Endothelial cell of umbilical vein (primary cell): ENCODE measurements at regions of chr2 and their contacts with region 1.

Region 1: GRCh38 chr2:142796161-142796560 is 81.3 kb upstream of the KYNU start:
- DNase-seq: peak; percentile 34
- H3K4me3 ChIP-seq: no peak overlapping the region
- H3K27ac ChIP-seq: no peak overlapping the region
- H3K4me1 ChIP-seq: no peaks in the 10 kb centered on the region
- H3K27me3 ChIP-seq: no peaks in the 10 kb centered on the region
- CTCF ChIP-seq: no peak
- POLR2A ChIP-seq: no peak

Region 2: DNA sequence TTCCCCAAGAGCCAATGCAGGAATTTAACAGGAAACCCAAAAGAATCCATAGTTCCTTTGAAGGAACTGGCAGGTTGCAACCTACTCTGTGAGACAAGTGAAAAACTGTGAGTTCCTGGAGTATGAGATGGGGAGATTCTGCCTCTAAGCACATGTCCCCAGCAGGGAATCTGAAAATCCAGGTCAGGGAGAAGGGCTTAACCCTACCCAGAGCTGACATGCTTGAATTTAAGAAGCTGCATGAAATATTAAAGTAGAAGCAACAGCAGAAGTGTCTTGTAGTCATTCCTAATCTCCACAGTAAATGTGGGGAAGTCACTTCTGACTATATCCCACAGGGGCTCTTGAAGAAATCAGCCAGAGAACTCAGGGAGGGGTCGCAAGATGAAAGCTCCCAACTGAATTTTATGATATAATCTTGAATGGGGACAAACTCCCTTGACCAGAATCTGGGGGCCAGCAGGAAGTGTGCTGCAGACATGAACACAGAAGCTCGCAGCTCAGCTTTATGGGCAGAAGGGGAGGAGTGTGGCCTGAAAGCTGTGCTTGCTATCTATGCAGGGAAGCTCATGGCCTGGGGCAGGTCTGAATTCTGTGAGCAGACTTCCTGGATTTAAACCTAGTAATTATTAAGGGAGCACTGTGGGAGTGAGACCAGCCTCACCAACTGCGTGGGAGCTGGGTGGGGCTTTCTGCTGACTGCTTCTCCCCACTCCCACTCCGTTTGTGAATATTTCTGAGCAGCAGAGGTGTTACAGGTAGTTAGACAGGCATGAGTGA is 102.8 kb before region 1 on chr2:
- CTCF ChIA-PET with region 1: no interaction called
- POLR2A ChIA-PET with region 1: no interaction called
- dilution Hi-C with region 1: no loop called
- intact Hi-C with region 1: loop called (anchors 5 kb)
- DNase-seq: no peak
- H3K4me3 ChIP-seq: no peak overlapping the region
- H3K27ac ChIP-seq: no peak overlapping the region
- H3K4me1 ChIP-seq: no peaks in the 10 kb centered on the region
- H3K27me3 ChIP-seq: no peaks in the 10 kb centered on the region
- CTCF ChIP-seq: no peak
- POLR2A ChIP-seq: no peak